Activated CD4-positive, alpha-beta memory T cell treated with anti-CD3 and anti-CD28 coated beads for 36 hours (primary cell): ENCODE measurements at regions of chr2 and their contacts with region 1.

Region 1: DNA sequence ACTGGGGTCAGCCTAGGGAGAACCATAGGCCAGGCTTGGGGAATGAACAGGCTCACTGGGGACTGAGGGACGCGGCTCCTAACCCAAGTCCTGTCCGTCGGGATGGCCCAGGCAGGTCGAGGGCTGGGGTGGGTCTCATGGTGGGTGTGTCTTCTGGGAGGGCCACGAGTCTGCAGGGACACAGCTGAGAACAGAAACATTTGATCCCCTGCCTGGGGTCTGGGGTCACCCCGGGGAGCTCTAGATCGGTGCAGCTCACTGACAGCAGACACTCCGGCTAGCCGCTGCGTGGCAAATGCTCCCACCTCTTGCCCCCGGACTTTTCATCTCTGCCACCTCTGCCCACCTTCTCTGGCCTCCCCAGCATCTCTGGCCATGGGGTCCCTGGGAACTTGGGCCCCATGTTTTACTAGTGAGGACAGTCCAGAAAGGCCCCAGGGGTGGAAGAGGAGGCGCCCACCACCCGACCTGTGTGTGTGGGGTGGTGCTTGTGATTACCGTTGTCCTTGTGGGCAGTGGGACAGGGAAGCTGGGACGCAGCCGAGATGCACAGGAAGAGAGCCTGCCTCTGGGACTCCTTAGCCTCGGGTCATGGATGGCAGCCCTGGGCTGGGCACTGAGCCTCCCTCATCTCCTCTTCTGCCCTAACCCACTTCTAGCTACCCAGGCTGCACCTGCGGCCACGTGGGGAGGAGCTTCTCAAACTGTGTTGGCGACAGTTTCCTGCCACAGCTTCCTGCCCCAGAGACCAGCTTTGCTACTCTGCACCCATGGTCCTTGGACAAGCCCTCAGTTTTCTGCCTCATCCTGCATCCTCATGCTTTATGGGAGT is 4.9 kb downstream of the ZAP70 start:
- DNase-seq: peak; percentile 87
- H3K4me3 Mint-ChIP-seq: peak overlapping the region; percentile 76
- H3K27ac Mint-ChIP-seq: peak overlapping the region; percentile 95
- H3K4me1 Mint-ChIP-seq: peaks cover 71% of the 10 kb centered on the region
- H3K27me3 Mint-ChIP-seq: no peaks in the 10 kb centered on the region

Region 2: DNA sequence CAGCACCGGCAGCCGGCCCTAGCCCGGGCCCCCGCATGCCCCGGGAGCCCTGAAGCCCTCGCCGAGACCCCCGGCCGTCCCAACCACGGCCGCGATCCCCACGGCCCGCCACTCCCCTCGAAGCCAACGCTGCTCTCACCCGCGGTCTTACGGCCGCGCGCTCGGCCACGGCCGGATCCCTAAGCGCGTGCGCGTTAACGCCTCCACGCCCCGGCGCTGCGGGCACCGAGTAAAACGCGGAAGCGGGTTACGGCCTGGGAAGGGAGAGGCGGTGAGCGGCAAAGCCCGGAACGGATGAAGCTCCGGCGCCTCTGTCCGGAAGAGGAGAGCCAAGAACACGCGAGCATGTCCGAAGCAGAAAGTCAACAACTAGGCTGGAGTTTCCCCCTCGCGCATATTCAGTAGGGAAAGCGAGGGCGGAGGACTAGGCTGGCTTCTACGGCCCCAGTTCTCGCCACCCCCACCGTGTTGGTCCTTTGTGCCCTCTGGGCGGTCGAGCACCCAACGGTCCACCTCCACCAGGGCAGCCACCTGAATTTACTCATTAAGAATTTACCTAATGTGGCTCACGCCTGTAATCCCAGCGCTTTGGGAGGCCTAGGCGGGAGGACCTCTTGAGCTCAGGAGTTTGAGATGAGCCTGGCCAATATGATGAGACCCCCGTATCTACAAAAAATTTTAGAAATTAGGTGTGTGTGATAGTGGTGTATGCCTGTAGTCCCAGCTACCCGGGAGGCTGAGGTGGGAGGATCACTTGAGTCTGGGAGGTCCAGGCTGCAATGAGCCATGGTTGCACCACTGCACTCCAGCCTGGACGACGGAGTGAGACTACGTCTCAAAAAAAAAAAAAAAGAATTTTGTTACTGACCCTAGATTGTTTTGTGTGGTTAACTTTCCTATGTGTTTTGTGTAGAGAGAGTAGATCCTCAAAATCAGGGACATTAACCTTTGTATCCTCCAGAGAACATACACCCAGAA is 1079.8 kb before region 1 on chr2 and contains the start of gene KANSL3:
- CTCF ChIA-PET with region 1: no interaction called
- POLR2A ChIA-PET with region 1: no interaction called
- intact Hi-C with region 1: no loop called
- DNase-seq: peak; percentile 93
- H3K4me3 Mint-ChIP-seq: peak within 1 kb of the TSS; percentile 97
- H3K27ac Mint-ChIP-seq: peak within 1 kb of the TSS; percentile 90
- H3K4me1 Mint-ChIP-seq: peaks cover 28% of the 10 kb centered on the region
- H3K27me3 Mint-ChIP-seq: no peaks in the 10 kb centered on the region
- total RNA-seq, gene KANSL3: 33.7 to 39.4 TPM

Region 3: GRCh38 chr2:96881349-96882195 is 836.7 kb before region 1 on chr2:
- CTCF ChIA-PET with region 1: no interaction called
- POLR2A ChIA-PET with region 1: no interaction called
- intact Hi-C with region 1: no loop called
- DNase-seq: no peak
- H3K4me3 Mint-ChIP-seq: no peak overlapping the region
- H3K27ac Mint-ChIP-seq: no peak overlapping the region
- H3K4me1 Mint-ChIP-seq: no peaks in the 10 kb centered on the region
- H3K27me3 Mint-ChIP-seq: no peaks in the 10 kb centered on the region

Region 4: GRCh38 chr2:97645695-97646629 is 72.3 kb before region 1 on chr2 and contains the start of gene COX5B:
- CTCF ChIA-PET with region 1: interaction called, 9 read pairs
- POLR2A ChIA-PET with region 1: interaction called, 19 read pairs
- intact Hi-C with region 1: no loop called
- DNase-seq: peak; percentile 100
- H3K4me3 Mint-ChIP-seq: peak within 1 kb of the TSS; percentile 81
- H3K27ac Mint-ChIP-seq: peak within 1 kb of the TSS; percentile 88
- H3K4me1 Mint-ChIP-seq: peaks cover 21% of the 10 kb centered on the region
- H3K27me3 Mint-ChIP-seq: no peaks in the 10 kb centered on the region
- total RNA-seq, gene COX5B: 215 to 217 TPM

Region 5: DNA sequence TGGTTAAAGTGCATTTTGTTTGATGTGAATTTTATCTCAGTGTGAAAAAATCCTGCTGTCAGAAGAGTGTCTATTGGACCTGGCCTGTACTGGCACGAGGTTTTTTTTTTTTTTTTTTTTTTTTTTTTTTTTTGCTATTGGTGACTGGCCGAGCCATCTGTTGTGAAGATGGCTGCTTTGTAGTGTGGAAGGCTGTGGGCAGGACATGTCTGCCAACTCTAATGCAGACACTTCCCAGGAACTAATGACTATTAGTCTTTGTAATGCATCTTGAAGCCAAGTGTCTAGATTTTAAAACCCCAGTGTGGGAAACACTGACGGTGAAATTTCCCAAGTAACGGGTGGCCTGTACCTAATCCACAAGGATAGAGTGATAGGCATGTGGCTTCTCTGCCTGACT is 29.4 kb after region 1 on chr2:
- CTCF ChIA-PET with region 1: interaction called, 26 read pairs
- POLR2A ChIA-PET with region 1: interaction called, 26 read pairs
- intact Hi-C with region 1: loop called (anchors 1 kb)
- DNase-seq: peak; percentile 3
- H3K4me3 Mint-ChIP-seq: no peak overlapping the region
- H3K27ac Mint-ChIP-seq: no peak overlapping the region
- H3K4me1 Mint-ChIP-seq: peaks cover 43% of the 10 kb centered on the region
- H3K27me3 Mint-ChIP-seq: no peaks in the 10 kb centered on the region

Region 6: GRCh38 chr2:97812931-97813330 is 94.7 kb after region 1 on chr2:
- CTCF ChIA-PET with region 1: no interaction called
- POLR2A ChIA-PET with region 1: no interaction called
- intact Hi-C with region 1: no loop called
- DNase-seq: no peak
- H3K4me3 Mint-ChIP-seq: no peak overlapping the region
- H3K27ac Mint-ChIP-seq: no peak overlapping the region
- H3K4me1 Mint-ChIP-seq: no peaks in the 10 kb centered on the region
- H3K27me3 Mint-ChIP-seq: no peaks in the 10 kb centered on the region

Region 7: DNA sequence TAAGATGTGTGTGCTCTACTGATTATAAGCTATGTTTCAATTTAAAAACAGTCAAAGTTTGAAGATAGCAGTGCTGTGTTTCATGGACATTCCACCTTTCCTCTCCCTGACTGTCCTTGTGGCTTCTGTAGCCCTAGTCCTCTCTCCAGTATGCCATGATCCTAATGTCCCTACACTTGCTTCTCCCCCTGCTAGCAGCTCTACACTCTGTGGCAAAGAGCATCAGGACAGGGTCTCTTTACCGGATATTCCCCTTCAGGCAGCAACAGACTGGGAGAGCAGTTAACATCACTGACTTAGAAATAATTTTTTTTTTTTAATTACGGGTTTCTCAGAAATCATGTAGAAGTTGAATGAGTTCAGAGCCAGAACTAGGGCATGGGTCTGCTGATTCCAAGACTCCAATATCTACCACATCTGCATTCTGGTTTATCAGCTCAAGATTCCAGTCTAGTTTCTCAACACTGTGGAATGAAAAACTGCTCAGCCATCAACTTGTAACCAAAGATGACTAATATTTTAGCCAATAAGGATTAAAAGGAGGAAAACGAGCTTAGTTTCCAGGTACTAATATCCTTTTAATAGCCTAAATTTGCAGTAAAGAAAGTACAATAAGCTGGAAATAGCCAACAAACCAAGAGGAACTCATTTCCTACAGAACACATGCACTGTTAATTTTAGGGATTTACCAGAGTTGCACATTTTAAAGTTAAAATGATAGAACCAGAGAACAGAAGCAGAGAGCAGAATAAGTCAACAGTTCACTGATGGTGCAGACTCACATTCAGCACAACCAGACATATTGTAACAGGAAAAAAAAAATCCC is 232.3 kb after region 1 on chr2:
- CTCF ChIA-PET with region 1: no interaction called
- POLR2A ChIA-PET with region 1: no interaction called
- intact Hi-C with region 1: no loop called
- DNase-seq: no peak
- H3K4me3 Mint-ChIP-seq: no peak overlapping the region
- H3K27ac Mint-ChIP-seq: no peak overlapping the region
- H3K4me1 Mint-ChIP-seq: peaks cover 59% of the 10 kb centered on the region
- H3K27me3 Mint-ChIP-seq: no peaks in the 10 kb centered on the region

Region 8: DNA sequence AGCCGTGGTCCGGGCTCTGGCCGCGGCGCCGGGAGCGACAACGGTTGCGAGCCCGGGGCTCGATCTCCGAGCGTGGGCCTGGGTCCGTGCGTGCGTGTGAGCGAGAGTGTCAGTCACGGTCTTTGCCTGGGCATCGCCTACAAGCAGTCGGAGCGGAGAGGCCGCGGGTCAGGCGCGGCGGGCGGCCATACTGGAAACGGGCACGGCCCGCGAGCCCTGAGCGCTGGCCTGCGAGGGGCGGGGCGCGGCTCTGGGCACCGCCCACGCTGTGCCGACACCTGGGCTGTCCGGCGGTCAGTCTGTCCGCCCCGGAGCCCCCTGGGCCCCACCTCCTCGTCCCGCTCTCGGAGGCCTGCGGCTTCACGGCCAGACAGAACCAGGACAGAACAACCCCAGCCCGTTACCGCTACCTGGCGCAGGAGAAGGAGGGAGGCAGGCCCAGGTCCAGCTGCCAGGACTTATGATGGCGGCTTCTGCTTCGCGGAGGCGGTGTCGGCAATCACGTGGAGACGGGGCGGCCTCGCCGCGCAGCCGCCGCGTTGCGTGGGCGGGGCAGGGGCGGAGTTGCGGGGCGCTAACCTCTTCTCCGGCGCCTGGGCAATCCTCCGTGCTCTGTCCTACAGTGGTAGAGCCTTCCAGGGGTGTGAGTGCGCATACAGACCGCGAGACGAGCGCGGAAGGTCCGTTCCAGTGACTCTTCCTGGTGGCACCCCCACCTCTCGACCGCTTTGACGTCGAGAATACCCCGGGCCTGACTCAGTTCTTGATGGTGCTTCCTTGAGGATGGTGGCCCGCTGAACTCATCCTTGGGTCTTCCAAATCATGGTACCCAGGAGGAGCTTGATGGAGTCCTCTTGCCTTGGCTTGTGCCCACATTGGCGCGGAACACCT is 277.7 kb after region 1 on chr2 and contains the start of gene TMEM131:
- CTCF ChIA-PET with region 1: no interaction called
- POLR2A ChIA-PET with region 1: no interaction called
- intact Hi-C with region 1: loop called (anchors 10 kb)
- DNase-seq: peak; percentile 97
- H3K4me3 Mint-ChIP-seq: peak within 1 kb of the TSS; percentile 87
- H3K27ac Mint-ChIP-seq: peak within 1 kb of the TSS; percentile 95
- H3K4me1 Mint-ChIP-seq: peaks cover 32% of the 10 kb centered on the region
- H3K27me3 Mint-ChIP-seq: no peaks in the 10 kb centered on the region
- total RNA-seq, gene TMEM131: 23.1 to 23.7 TPM